Mammary epithelial cell (primary cell): ENCODE measurements at regions of chr3 and their contacts with region 1.

Region 1: GRCh38 chr3:30511524-30512278 is 94.7 kb upstream of the TGFBR2 start:
- DNase-seq: peak; percentile 97
- H3K4me3 ChIP-seq: peak overlapping the region in 1 of 3 experiments; percentile 6
- H3K27ac ChIP-seq: peak overlapping the region; percentile 93
- H3K4me1 ChIP-seq: peaks cover 34% of the 10 kb centered on the region
- H3K27me3 ChIP-seq: no peaks in the 10 kb centered on the region
- CTCF ChIP-seq: no peak

Region 2: DNA sequence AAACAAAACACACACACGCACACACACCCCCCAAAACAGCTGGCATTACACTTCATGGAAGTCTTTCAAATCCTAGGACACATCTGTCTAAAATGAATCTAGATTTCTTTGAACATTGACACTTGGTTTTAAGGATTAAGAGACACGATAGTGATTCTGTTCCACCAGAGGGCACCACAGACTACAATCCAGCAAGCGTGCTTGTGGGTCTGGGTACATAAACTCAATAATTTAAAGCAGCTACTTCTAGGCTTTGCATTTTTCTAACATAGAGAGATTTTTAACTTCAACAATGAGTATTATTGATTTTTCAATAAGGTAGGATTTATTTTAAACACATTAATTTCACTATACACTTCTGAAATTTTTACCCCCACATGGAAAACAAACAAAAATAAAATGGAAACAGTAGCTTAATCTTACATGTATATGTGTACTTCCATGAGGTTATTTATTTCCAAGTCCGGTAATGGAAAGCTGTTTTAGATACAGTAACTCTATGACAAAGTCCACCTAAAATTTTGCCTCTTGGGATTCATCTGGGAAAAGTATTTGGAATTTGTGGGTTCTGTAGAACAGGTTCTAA is 469.3 kb before region 1 on chr3:
- CTCF ChIA-PET with region 1: no interaction called
- dilution Hi-C with region 1: no loop called
- in situ Hi-C with region 1: no loop called
- intact Hi-C with region 1: loop called (anchors 5 kb)
- DNase-seq: peak; percentile 39
- H3K4me3 ChIP-seq: no peak overlapping the region
- H3K27ac ChIP-seq: no peak overlapping the region
- H3K4me1 ChIP-seq: no peaks in the 10 kb centered on the region
- H3K27me3 ChIP-seq: no peaks in the 10 kb centered on the region
- CTCF ChIP-seq: peak; percentile 72 to 75

Region 3: DNA sequence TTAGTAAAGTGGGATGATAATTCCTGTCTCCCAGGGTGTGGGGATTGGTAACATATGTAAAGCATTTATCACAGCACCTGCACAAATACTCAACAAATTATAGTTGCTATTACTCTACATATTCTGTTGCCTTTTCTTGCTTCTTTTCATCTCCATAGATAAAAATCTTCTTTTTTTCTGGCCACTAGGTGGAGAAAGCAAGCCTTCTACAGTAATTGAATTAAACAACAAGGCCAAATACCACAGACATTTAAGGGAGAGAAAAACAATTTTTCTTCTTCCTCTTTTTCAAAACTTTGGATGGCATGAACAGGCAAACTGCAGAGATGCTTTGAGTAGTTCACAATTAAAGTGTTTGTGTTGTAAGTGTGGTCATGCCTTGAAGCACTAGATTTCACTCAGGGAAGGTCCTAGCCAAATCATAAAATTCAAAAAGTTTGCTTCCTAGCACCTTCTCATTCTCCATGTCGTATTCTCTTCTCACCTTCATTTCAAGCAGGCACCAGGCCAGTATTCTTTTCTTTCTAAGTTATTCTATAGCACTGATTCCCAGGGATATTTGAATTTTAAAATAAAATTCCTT is 398.7 kb before region 1 on chr3:
- CTCF ChIA-PET with region 1: no interaction called
- dilution Hi-C with region 1: no loop called
- in situ Hi-C with region 1: no loop called
- intact Hi-C with region 1: loop called (anchors 5 kb)
- DNase-seq: peak; percentile 31
- H3K4me3 ChIP-seq: no peak overlapping the region
- H3K27ac ChIP-seq: no peak overlapping the region
- H3K4me1 ChIP-seq: peaks cover 2% of the 10 kb centered on the region
- H3K27me3 ChIP-seq: no peaks in the 10 kb centered on the region
- CTCF ChIP-seq: peak; percentile 58 to 63

Region 4: DNA sequence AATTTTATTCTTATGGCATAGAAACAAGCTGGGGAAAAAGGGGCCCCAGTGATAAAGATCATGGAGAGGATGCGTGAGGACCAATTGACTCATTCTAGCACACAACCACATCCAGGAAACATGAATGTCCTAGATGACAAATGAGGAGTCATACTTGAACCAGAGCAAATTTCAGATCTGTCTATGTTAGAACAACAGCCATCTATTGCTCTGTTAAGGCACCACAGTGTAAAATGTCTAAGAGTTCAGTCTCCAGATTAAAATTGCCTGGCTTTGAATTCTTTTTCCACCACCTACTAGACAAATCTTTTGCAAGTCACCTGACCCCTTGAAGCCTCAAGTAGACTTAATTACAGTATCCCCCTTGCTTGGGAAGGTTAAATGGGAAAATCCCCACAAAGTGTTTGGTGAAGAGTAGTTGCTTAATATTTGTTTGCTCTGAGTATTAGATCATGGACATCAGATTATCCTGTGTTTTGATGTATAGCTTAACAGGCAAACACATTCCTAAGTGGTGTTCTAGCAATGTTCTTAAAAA is 164.0 kb before region 1 on chr3:
- CTCF ChIA-PET with region 1: no interaction called
- dilution Hi-C with region 1: no loop called
- in situ Hi-C with region 1: no loop called
- intact Hi-C with region 1: loop called (anchors 1 kb)
- DNase-seq: peak; percentile 93
- H3K4me3 ChIP-seq: no peak overlapping the region
- H3K27ac ChIP-seq: peak overlapping the region; percentile 92
- H3K4me1 ChIP-seq: peaks cover 78% of the 10 kb centered on the region
- H3K27me3 ChIP-seq: no peaks in the 10 kb centered on the region
- CTCF ChIP-seq: no peak

Region 5: GRCh38 chr3:30538787-30539186 is 27.1 kb after region 1 on chr3:
- CTCF ChIA-PET with region 1: no interaction called
- dilution Hi-C with region 1: no loop called
- in situ Hi-C with region 1: no loop called
- intact Hi-C with region 1: loop called (anchors 1 kb)
- DNase-seq: peak; percentile 83
- H3K4me3 ChIP-seq: peak overlapping the region in 1 of 3 experiments; percentile 12
- H3K27ac ChIP-seq: peak overlapping the region; percentile 92
- H3K4me1 ChIP-seq: peaks cover 23% of the 10 kb centered on the region
- H3K27me3 ChIP-seq: no peaks in the 10 kb centered on the region
- CTCF ChIP-seq: no peak

Region 6: DNA sequence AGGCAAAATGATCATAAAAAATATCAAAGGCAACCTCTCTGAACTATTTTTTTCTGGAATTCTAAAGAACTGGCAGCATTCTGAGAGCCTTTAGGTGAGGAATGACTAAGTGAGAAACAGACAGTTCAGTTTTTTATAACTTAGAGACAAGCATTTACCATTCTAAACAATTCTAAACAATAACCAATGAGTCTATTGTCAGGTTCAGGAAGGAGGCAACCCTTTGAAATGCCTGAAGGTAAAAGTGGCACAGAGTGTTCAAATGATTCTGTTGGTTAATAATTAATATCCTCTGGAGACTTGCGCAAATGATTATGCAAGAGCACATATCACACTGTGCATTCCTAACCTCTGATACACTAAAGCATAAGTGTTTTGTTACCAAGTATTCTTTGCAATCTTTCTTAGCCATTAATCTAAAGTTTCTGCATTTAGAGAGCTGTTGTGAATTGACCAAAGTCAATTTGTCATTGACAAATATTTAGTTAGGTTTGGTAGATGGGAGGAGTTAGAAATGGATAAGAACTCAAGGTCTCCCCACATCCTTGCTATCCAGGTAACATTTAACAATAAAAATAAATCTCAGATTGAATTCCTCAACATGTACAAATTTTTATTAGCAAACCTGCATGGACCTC is 85.5 kb after region 1 on chr3:
- CTCF ChIA-PET with region 1: no interaction called
- dilution Hi-C with region 1: loop called (anchors 5 kb)
- in situ Hi-C with region 1: loop called in 1 of 2 experiments (anchors 10 kb)
- intact Hi-C with region 1: no loop called
- DNase-seq: peak; percentile 97
- H3K4me3 ChIP-seq: no peak overlapping the region
- H3K27ac ChIP-seq: peak overlapping the region; percentile 100
- H3K4me1 ChIP-seq: peaks cover 35% of the 10 kb centered on the region
- H3K27me3 ChIP-seq: no peaks in the 10 kb centered on the region
- CTCF ChIP-seq: no peak